Activated CD4-positive, alpha-beta memory T cell treated with anti-CD3 and anti-CD28 coated beads for 36 hours (primary cell): ENCODE measurements at regions of chr12 and their contacts with region 1.

Region 1: DNA sequence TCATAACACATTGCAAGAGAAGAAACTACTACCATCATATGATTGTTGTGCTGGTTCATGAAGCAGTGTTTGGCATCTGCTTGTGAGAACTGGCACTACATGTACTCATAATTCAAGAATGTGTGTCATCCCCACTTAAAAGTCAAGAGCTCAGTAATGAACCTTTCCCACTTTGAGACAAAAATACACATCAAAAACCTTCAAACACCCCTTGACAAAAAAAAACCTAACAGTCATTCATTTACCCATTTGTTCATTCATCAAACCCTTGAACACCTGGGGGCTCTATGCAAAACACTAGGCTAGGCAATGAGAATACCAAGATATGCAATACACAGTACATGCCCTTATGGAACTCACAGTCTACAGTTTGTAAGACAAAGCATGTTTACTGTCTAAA is 40.0 kb downstream of the KIF21A start:
- DNase-seq: no peak
- H3K4me3 Mint-ChIP-seq: no peak overlapping the region
- H3K27ac Mint-ChIP-seq: no peak overlapping the region
- H3K4me1 Mint-ChIP-seq: peaks cover 25% of the 10 kb centered on the region
- H3K27me3 Mint-ChIP-seq: no peaks in the 10 kb centered on the region

Region 2: DNA sequence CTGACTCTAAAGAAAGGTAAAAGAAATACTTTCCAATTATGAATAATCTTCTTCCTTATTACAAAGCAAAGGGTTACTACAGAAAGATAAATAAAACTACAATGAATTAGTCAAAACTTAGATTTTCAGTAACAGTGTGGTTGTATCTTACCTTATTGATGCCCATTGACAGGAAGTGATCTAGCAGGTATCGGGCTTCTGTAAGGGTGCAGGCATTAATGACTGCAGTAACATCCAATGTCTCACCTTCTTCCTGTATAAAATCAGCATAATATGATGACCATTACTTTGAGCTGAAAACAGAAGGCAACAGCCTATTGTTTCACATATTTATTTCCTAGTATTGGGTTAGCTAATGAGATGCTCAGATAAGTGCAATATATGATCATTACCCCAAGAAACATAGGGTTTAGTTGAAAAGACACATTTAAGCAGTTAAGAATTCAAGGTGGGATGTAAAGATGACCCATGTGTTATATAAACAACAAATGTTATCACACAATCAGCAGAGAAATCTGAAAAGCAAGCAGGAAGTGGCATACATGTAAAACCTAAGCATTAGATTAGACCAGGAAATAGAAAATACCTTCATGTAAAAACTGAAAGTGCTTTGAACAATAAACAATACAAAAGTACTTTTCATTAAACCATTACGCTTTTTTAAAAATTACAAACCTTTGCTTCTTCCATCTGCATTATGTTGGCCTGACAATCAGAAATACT is 71.2 kb before region 1 on chr12:
- CTCF ChIA-PET with region 1: no interaction called
- POLR2A ChIA-PET with region 1: no interaction called
- intact Hi-C with region 1: loop called (anchors 5 kb)
- DNase-seq: no peak
- H3K4me3 Mint-ChIP-seq: no peak overlapping the region
- H3K27ac Mint-ChIP-seq: no peak overlapping the region
- H3K4me1 Mint-ChIP-seq: peaks cover 18% of the 10 kb centered on the region
- H3K27me3 Mint-ChIP-seq: no peaks in the 10 kb centered on the region

Region 3: DNA sequence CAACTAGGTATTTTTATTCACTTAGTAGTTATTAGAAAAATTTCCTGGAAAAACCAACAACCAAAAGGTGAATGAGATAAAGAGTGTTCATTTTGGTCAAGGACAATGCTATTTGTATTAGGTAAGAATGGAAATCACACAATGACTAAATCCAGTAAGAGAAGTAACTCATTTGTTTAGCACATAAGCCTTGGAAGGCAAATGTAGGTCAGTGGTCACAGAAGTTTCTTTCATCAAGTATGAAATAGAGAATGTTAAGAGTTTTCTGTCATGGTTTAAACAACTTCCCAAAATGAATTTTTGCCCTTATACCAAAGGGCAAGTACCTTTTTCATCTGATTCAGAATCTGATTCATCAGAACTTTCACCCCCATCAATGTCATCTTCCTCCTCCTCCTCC is 61.7 kb before region 1 on chr12:
- CTCF ChIA-PET with region 1: no interaction called
- POLR2A ChIA-PET with region 1: no interaction called
- intact Hi-C with region 1: loop called (anchors 5 kb)
- DNase-seq: no peak
- H3K4me3 Mint-ChIP-seq: no peak overlapping the region
- H3K27ac Mint-ChIP-seq: peak overlapping the region; percentile 23
- H3K4me1 Mint-ChIP-seq: peaks cover 16% of the 10 kb centered on the region
- H3K27me3 Mint-ChIP-seq: no peaks in the 10 kb centered on the region